Activated T-helper 2 cell treated with anti-CD3 and anti-CD28 coated beads, Interferon-gamma antibody, Interleukin-2, Interleukin-4, amounts not matched to agents 10 μg/mL and 5 μg/mL and 100 μg/mL, durations not matched to agents 14 hours and 24 hours and 36 hours (primary cell): ENCODE measurements at regions of chr14 and their contacts with region 1.

Region 1: DNA sequence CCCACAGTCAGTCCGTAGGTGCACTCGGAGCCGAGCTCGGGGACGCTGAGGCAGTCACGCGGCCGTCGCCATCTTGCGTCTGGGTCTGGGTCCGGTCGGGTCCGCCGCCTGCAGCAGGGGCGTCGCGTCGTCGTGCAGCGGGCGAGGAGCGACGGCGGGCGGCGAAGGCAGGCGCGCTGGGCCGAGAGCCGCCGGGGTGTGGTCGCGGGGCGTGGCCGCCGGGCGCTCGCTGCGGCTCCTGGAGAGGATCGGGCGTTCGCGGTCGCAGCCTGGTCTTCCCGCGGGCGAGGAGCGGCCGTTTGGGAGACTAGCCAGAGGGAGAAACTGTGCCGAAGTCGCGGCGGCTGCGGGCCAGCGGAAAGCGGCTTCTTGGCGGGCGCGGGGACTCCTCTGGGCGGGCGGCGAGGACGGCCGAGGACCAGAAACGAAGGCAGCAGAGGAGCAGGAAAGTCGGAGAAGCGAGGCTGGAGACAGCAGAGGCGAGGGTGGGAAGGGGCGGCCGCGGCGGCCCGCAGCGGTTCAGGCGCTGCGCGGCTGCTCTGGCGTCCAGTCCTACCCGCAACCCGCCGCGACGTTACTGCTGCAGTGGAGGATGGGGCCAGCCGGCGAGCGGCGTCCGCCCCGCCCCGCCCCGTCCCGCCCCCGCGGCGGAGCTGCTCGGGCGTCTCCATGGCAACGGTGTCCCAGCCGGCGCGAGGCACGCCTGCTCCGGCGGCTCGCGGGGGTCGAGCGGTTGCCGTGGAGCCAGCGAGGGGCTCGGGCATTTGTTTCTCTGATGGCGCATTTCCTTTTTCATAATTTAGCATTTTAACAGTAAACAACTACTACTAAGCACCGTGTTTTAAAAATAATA is at the start of gene PNMA1:
- DNase-seq: peak; percentile 85
- H3K4me3 Mint-ChIP-seq: peak within 1 kb of the TSS; percentile 86
- H3K27ac Mint-ChIP-seq: peak within 1 kb of the TSS; percentile 92
- H3K4me1 Mint-ChIP-seq: peaks cover 16% of the 10 kb centered on the region
- H3K27me3 Mint-ChIP-seq: no peaks in the 10 kb centered on the region
- total RNA-seq, gene PNMA1: 30.1 and 32.1 TPM in 2 replicates

Region 2: GRCh38 chr14:73568381-73568781 is 145.6 kb before region 1 on chr14:
- intact Hi-C with region 1: loop called (anchors 5 kb)
- DNase-seq: no peak
- H3K4me3 Mint-ChIP-seq: peak overlapping the region; percentile 90
- H3K27ac Mint-ChIP-seq: peak overlapping the region; percentile 96
- H3K4me1 Mint-ChIP-seq: peaks cover 38% of the 10 kb centered on the region
- H3K27me3 Mint-ChIP-seq: no peaks in the 10 kb centered on the region

Region 3: GRCh38 chr14:73696466-73697400 is 17.3 kb before region 1 on chr14:
- intact Hi-C with region 1: loop called (anchors 2 kb)
- DNase-seq: no peak
- H3K4me3 Mint-ChIP-seq: peak overlapping the region; percentile 42
- H3K27ac Mint-ChIP-seq: peak overlapping the region; percentile 83
- H3K4me1 Mint-ChIP-seq: peaks cover 34% of the 10 kb centered on the region
- H3K27me3 Mint-ChIP-seq: no peaks in the 10 kb centered on the region

Region 4: GRCh38 chr14:73759714-73760597 is 45.9 kb after region 1 on chr14:
- intact Hi-C with region 1: loop called (anchors 5 kb)
- DNase-seq: peak; percentile 95
- H3K4me3 Mint-ChIP-seq: peak overlapping the region; percentile 83
- H3K27ac Mint-ChIP-seq: peak overlapping the region; percentile 94
- H3K4me1 Mint-ChIP-seq: peaks cover 75% of the 10 kb centered on the region
- H3K27me3 Mint-ChIP-seq: no peaks in the 10 kb centered on the region

Region 5: GRCh38 chr14:74018586-74019407 is 304.8 kb after region 1 on chr14 and contains the starts of genes BBOF1 and ENTPD5:
- intact Hi-C with region 1: loop called (anchors 5 kb)
- DNase-seq: peak; percentile 86
- H3K4me3 Mint-ChIP-seq: peak within 1 kb of the TSS; percentile 97
- H3K27ac Mint-ChIP-seq: peak within 1 kb of the TSS; percentile 98
- H3K4me1 Mint-ChIP-seq: peaks cover 11% of the 10 kb centered on the region
- H3K27me3 Mint-ChIP-seq: peaks cover 2% of the 10 kb centered on the region
- total RNA-seq, gene BBOF1: 0.23 and 0.82 TPM in 2 replicates
- total RNA-seq, gene ENTPD5: 9.9 and 11.5 TPM in 2 replicates